Esophagus squamous epithelium (tissue), 5 donors: ENCODE measurements at regions of chr15 and their contacts with region 1.

Region 1: GRCh38 chr15:77496710-77497103 is 76.0 kb downstream of the HMG20A start:
- DNase-seq: no peak
- H3K4me3 ChIP-seq: peak overlapping the region in 2 of 4 donors; percentile 20 to 44
- H3K27ac ChIP-seq: peak overlapping the region; percentile 56 to 84 (median 75)
- H3K4me1 ChIP-seq: peaks cover 16 to 73% (median 29%) of the 10 kb centered on the region in 3 donors
- H3K27me3 ChIP-seq: no peaks in the 10 kb centered on the region
- CTCF ChIP-seq: peak; percentile 81 to 93 (median 86)
- POLR2A ChIP-seq: no peak

Region 2: DNA sequence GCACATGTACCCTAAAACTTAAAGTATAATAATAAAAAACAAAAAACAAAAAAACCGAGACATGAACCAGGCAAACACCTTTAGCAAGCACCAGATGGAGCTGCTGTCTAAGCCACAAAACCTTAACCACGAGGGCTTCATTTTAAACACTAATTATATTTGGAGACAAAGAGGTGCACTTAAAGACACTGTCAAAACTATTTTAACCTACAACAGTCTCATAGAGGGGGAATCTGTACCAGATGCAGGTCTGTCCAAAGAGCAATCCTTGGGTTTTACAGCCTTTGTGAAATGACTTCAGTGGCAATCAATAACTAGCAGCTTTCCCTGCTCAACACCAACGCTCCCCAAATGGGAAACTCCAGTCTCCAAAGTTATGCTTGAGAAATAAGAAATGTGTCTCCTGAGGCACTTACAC is 310.1 kb before region 1 on chr15:
- intact Hi-C with region 1: loop called (anchors 10 kb)
- DNase-seq: no peak
- H3K4me3 ChIP-seq: no peak overlapping the region
- H3K27ac ChIP-seq: peak overlapping the region in 3 of 4 donors; percentile 70 to 76 (median 74)
- H3K4me1 ChIP-seq: peaks cover 0 to 35% (median 10%) of the 10 kb centered on the region in 3 donors
- H3K27me3 ChIP-seq: no peaks in the 10 kb centered on the region
- CTCF ChIP-seq: peak in 5 of 6 experiments; percentile 32 to 55 (median 39)
- POLR2A ChIP-seq: no peak

Region 3: DNA sequence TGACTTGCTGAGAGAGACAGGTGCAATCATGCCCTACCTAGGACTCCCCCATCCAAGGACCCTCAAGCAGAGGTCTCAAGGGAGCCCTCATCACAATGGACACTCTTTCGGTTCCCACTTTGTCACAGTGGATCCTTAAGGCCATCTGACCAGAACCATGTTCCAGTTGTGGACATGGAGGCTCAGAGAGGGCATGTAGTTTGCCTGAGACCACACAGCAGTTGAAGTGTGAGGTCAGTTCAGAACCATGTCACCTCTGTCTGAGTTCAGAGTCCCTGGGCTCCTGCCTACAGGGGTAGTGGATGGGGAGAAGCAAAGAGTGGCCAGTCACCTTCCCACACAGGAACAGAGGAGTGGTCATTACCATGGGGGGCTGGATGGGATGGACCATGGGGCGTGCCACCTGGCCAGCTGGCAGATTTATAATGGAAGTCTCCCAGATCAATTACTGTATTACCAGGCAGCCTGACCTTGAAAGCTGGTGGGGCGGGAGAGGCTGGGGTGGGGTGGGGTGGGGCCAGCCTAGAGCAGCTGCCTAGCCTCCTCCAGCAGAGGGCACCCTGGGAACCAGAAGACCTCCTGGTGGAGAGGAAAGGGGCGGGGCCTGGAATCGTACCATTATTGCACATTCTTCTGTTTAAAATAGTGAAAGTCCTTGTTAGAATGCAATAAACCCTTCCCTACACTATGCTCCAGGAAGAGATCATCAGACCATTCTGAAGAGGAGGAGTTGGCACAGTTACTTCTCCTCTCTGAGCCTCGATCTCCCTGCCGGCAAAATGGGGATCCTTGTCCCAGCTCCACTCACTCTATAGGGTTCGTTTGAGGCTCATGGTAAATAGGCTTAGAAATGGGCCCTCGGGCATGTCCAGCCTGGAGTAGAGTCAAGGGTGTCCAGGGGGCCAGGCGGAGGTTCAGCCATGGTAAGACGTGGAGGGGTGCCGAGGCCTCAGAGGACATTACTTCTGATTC is 162.9 kb after region 1 on chr15:
- intact Hi-C with region 1: no loop called
- DNase-seq: no peak
- H3K4me3 ChIP-seq: no peak overlapping the region
- H3K27ac ChIP-seq: no peak overlapping the region
- H3K4me1 ChIP-seq: peaks cover 0 to 6% (median 0%) of the 10 kb centered on the region in 3 donors
- H3K27me3 ChIP-seq: peaks cover 0 to 89% (median 0%) of the 10 kb centered on the region in 4 donors
- CTCF ChIP-seq: no peak
- POLR2A ChIP-seq: no peak

Region 4: DNA sequence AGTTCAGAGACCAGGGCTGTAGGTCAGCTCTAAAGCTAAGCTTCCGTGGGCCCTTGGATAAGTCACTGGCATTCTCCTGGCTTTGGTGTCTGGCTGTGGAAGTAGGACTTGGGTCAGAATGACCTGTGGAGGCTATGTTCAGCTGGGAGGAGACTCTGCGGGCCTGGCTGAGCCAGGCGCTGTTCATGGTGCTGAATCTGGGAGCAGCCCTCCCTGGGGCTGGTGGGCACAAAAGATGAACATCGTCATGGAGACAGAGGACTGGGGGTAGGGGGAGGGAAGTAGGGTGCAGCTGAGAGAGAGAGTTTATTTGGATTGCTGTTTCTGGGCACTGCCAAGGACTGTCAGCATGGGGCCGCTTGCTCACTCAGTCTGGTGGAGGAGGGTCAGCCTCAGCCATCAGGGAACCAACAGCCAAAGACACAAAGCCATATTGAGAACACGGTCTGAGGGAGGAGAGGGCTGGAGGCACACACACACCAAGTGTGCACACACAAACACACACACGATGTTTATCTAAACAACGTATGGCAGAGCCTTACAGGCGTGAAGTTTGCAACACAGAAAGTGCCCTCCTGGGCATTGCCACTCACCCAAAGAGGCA is 256.7 kb after region 1 on chr15:
- intact Hi-C with region 1: no loop called
- DNase-seq: no peak
- H3K4me3 ChIP-seq: no peak overlapping the region
- H3K27ac ChIP-seq: no peak overlapping the region
- H3K4me1 ChIP-seq: no peaks in the 10 kb centered on the region
- H3K27me3 ChIP-seq: peaks cover 0 to 9% (median 0%) of the 10 kb centered on the region in 4 donors
- CTCF ChIP-seq: no peak
- POLR2A ChIP-seq: no peak

Region 5: DNA sequence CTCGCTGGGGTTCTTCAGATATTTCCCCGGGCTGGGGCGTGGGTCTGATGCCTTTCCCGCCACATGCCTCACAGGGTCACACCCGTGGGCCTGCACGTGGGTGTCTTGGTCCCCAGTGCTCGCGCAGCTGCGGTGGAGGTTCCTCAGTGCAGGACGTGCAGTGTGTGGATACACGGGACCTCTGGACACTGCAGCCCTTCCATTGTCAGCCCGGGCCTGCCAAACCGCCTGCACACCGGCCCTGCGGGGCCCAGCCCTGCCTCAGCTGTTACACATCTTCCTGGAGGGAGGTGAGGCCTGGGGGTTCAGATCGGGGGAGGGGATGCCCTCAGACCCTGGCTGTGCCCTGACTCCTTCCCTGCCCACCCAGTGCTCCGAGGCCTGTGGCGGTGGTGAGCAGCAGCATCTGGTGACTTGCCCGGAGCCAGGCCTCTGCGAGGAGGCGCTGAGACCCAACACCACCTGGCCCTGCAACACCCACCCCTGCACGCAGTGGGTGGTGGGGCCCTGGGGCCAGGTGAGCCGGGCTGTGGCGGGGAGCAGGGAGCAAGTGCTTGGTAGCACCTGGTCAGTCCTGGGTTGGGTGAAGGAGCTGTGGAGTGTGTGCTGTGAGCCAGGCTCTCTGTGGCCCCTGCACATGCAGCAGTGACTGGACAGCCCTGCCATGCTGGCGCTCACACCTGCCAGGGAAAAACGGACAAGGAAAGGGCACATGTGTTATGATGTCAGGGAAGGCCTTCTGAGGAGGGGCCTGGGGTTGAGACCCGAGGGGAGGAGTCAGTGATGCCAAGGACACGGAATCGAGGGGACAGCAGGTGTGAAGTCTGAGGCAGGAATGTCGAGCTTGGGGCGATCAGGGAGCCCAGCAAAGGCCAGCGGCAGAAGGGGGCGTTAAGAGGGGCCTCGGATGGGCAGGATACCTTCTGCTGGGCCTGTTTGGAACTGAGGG is 491.9 kb after region 1 on chr15:
- intact Hi-C with region 1: no loop called
- DNase-seq: no peak
- H3K4me3 ChIP-seq: no peak overlapping the region
- H3K27ac ChIP-seq: no peak overlapping the region
- H3K4me1 ChIP-seq: peaks cover 29 to 75% (median 44%) of the 10 kb centered on the region in 3 donors
- H3K27me3 ChIP-seq: peaks cover 0 to 12% (median 0%) of the 10 kb centered on the region in 4 donors
- CTCF ChIP-seq: no peak
- POLR2A ChIP-seq: no peak